ENCODE measurements at regions of chr16 and their contacts with region 1.

Region 1: GRCh38 chr16:22357635-22357971 is 16.8 kb downstream of the CDR2 start:
- DNase-seq: no peak
- ATAC-seq: peak; percentile 74
- H3K4me3 Mint-ChIP-seq: peak overlapping the region; percentile 36
- H3K27ac Mint-ChIP-seq: peak overlapping the region; percentile 92
- H3K4me1 Mint-ChIP-seq: peaks cover 69% of the 10 kb centered on the region
- H3K27me3 Mint-ChIP-seq: no peaks in the 10 kb centered on the region

Region 2: DNA sequence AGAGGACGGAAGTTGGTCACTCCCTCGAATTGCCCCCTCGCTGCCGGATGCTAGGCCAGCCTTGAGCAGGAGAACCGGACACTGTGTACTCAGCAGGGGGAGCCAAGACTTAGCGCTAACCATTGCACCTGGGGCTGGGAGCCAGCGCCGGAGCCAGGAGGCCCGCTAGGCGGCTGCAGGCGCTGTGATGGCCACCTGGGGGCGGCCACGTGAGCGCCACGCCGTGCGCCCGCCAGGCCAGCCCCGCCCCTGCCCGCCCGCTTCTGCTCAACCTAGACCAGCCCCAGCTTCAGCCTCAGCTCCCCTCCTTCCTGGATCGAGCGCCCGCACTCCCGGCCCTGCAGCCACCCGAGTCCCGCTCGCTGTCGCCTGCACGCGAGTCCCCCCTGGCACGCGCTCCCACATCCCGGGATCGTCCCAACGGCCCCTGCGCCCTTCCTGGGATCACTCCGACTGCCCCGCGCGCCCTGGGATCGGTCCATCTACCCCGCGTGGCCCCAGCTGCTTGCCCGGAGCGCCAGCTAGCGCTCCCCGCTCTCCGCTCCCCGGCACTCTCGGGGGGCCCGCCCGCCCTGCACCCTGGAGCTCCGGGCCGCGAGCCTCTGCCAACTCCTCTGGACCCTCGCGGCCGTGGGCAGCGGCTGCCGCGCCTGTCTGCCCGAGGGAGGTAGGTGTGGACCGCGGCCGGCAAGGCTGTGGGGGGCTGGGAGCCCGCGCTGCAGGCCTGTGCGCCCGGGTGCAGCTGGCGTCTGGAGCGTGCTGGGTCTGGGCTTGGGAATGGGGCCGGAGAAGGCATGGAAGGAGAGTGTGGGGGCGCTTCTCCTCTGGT is 151.4 kb before region 1 on chr16 and contains the start of gene EEF2K:
- CTCF ChIA-PET with region 1: no interaction called
- DNase-seq: peak; percentile 92
- ATAC-seq: peak; percentile 95
- H3K4me3 Mint-ChIP-seq: peak within 1 kb of the TSS; percentile 97
- H3K27ac Mint-ChIP-seq: peak within 1 kb of the TSS; percentile 84
- H3K4me1 Mint-ChIP-seq: peaks cover 41% of the 10 kb centered on the region
- H3K27me3 Mint-ChIP-seq: no peaks in the 10 kb centered on the region
- total RNA-seq, gene EEF2K: 34.8 to 36.7 TPM

Region 3: GRCh38 chr16:22307838-22308237 is 49.8 kb before region 1 on chr16:
- CTCF ChIA-PET with region 1: no interaction called
- DNase-seq: no peak
- ATAC-seq: peak; percentile 17
- H3K4me3 Mint-ChIP-seq: no peak overlapping the region
- H3K27ac Mint-ChIP-seq: no peak overlapping the region
- H3K4me1 Mint-ChIP-seq: peaks cover 3% of the 10 kb centered on the region
- H3K27me3 Mint-ChIP-seq: no peaks in the 10 kb centered on the region

Region 4: GRCh38 chr16:22374311-22375116 is 16.9 kb after region 1 on chr16 and contains the start of gene CDR2:
- CTCF ChIA-PET with region 1: interaction called, 17 read pairs
- DNase-seq: peak; percentile 99
- ATAC-seq: peak; percentile 95
- H3K4me3 Mint-ChIP-seq: peak within 1 kb of the TSS; percentile 93
- H3K27ac Mint-ChIP-seq: peak within 1 kb of the TSS; percentile 96
- H3K4me1 Mint-ChIP-seq: peaks cover 46% of the 10 kb centered on the region
- H3K27me3 Mint-ChIP-seq: peaks cover 4% of the 10 kb centered on the region
- total RNA-seq, gene CDR2: 42.5 to 49.1 TPM